Breast epithelium (tissue), 4 donors: ENCODE measurements at regions of chr2 and their contacts with region 1.

Region 1: GRCh38 chr2:11930211-11930761 is 183.9 kb downstream of the LPIN1 start:
- DNase-seq: no peak
- H3K4me3 ChIP-seq: no peak overlapping the region
- H3K27ac ChIP-seq: no peak overlapping the region
- H3K4me1 ChIP-seq: no peaks in the 10 kb centered on the region
- H3K27me3 ChIP-seq: no peaks in the 10 kb centered on the region
- CTCF ChIP-seq: no peak
- POLR2A ChIP-seq: no peak

Region 2: DNA sequence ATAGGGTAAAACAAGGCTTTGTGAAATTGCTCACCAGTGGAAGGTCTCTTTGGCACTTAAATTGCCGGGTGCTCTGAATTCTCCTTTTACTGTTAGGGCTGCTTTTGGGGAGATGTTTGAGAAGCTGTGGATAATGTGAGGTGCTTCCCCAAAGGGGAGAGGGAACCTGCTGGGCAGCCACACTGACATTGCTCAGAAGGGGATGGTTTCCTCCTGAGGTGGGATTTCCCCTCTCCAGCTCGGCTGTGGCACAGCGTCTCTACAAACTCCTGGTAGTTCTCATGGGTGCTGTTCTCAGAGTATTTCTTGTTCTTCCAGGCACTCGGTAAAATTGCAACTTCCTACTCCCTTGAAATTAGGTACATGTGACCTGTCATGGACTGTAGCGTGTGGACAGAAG is 59.7 kb before region 1 on chr2:
- intact Hi-C with region 1: loop called (anchors 2 kb)
- DNase-seq: no peak
- H3K4me3 ChIP-seq: no peak overlapping the region
- H3K27ac ChIP-seq: no peak overlapping the region
- H3K4me1 ChIP-seq: no peaks in the 10 kb centered on the region
- H3K27me3 ChIP-seq: no peaks in the 10 kb centered on the region
- CTCF ChIP-seq: no peak
- POLR2A ChIP-seq: no peak